H1 (cell line): ENCODE measurements at regions of chr5 and their contacts with region 1.

Region 1: DNA sequence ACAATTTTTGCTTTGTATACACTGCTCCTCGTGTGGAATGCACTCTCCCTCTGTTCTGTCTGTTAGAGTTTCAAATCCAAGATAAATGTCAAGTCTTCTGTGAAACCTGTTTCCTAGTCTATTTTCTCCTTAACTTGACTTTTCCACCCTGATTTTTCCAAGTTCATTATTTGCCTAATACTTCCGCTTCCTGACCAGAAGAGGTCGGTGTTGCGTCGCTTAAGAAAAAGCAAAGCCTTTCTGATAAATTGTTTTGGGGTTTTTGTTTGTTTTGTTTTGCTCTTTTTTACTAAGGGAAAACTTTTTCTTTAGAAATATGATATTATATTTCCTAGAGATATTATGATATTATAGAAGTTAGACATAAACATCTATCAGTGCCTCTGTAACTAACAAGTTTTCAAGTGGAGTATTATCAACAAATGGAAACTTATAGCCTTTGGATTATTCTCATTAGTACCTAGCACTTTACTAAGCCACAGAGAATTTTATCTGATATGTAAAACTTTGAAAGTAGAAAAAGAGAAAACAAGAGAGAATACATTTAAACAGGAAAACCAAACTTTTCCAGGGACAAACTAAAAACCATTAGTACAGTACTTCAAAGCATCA is 55.8 kb downstream of the PHAX start:
- DNase-seq: no peak
- H3K4me3 ChIP-seq: no peak overlapping the region
- H3K27ac ChIP-seq: no peak overlapping the region
- H3K4me1 ChIP-seq: peaks cover 0 to 4% (median 0%) of the 10 kb centered on the region in 4 experiments; a peak in 1 of 7 replicates
- H3K27me3 ChIP-seq: no peaks in the 10 kb centered on the region
- CTCF ChIP-seq: peak in 2 of 3 experiments; percentile 66 to 68; a peak in 3 of 4 replicates
- EP300 ChIP-seq: no peak
- POLR2A ChIP-seq: no peak
- RAD21 ChIP-seq: peak; percentile 94 to 95

Region 2: DNA sequence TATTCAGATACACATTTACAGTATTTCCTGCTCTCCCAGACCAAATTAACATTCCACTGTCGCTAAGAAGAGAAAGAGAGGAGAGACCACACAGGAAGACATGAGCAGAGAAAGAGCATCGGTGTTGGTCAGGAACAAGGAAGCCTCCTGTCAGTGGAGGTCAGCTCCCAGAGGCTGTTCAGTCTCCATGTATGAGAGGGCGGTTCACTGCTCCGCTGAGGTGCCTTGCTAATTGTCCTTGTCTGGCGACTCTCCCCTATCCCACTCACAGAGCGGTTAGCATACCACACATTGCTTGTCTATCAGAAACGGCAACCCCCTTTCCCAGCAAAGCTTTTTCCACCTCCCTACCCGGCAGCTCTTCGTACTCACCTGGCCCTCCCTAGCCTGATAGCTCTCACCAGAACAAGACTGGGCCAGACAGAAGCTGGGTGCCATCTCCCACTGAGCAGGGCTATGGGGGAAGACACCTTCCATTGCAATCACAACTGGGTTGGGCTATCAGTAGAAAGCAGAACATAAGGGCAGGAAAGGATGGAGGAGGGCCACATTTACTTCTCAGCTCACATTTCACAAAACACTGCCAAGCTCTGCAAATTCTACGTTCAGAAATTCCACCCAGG is 61.9 kb after region 1 on chr5:
- CTCF ChIA-PET with region 1: no interaction called
- POLR2A ChIA-PET with region 1: no interaction called
- DNase-seq: peak; percentile 3 to 61
- H3K4me3 ChIP-seq: no peak overlapping the region
- H3K27ac ChIP-seq: no peak overlapping the region
- H3K4me1 ChIP-seq: peaks cover 0 to 6% (median 2%) of the 10 kb centered on the region in 4 experiments; a peak in 3 of 7 replicates
- H3K27me3 ChIP-seq: no peaks in the 10 kb centered on the region
- CTCF ChIP-seq: no peak
- EP300 ChIP-seq: no peak
- POLR2A ChIP-seq: no peak
- RAD21 ChIP-seq: no peak

Region 3: GRCh38 chr5:126801992-126802294 is 145.4 kb after region 1 on chr5:
- CTCF ChIA-PET with region 1: interaction called, 18 read pairs
- POLR2A ChIA-PET with region 1: no interaction called
- DNase-seq: no peak
- H3K4me3 ChIP-seq: no peak overlapping the region; a peak in 1 of 8 replicates
- H3K27ac ChIP-seq: no peak overlapping the region
- H3K4me1 ChIP-seq: 0 out of 7 replicates have a peak, but pooled peaks cover 0 to 3% (median 0%) of the 10 kb centered on the region in 4 experiments
- H3K27me3 ChIP-seq: no peaks in the 10 kb centered on the region
- CTCF ChIP-seq: no peak
- EP300 ChIP-seq: no peak
- POLR2A ChIP-seq: no peak
- RAD21 ChIP-seq: peak; percentile 15 to 18; a peak in 3 of 4 replicates